Mammary epithelial cell (primary cell): ENCODE measurements at regions of chr20 and their contacts with region 1.

Region 1: DNA sequence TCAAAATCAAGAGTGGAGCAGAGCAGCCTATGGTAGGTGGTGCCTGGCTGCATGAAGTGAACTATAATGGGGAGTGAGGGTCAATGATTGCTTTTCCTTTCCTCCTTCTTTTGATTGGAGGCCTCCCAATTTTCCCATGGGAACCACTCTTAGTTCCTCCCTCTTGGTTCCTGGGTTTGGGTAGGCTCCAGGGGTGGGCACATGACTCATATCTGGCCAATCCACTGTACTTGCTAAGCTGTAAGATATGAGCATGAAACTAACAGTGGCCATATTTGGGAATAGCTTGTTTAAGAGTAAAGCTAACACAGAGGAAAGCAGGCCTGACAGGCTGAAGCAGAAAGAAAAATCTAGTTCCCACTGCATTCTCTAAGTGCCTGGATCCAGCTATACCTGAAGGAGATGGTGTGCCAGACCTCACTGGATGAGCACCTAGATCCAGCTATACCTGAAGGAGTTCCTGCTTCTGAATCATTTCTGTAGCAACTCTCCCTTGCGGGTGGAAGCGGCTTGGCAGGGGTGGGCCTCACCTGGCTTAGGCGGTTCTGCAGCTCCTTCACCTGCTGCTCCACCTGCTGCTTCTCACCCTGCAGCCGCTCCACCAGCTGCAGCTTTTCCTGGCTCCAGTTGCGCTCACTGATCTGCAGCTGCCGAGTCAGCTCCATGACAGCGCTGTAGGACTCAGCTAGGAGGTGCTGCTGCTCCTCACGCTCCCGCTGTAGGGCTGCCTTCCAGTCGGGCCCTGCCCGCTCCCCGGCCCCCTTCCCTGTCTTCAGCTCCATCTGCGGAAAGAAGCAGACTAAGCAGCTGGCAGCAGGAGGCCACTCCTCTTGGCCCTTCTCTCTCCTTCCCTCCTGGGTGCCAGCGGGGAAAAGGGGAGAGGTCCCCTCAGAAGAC is 29.0 kb upstream of the DSN1 start:
- DNase-seq: peak; percentile 13
- H3K4me3 ChIP-seq: no peak overlapping the region
- H3K27ac ChIP-seq: no peak overlapping the region
- H3K4me1 ChIP-seq: no peaks in the 10 kb centered on the region
- H3K27me3 ChIP-seq: no peaks in the 10 kb centered on the region
- CTCF ChIP-seq: no peak

Region 2: GRCh38 chr20:36728986-36729385 is 73.6 kb before region 1 on chr20:
- CTCF ChIA-PET with region 1: no interaction called
- dilution Hi-C with region 1: loop called (anchors 5 kb)
- in situ Hi-C with region 1: no loop called
- intact Hi-C with region 1: no loop called
- DNase-seq: peak; percentile 58
- H3K4me3 ChIP-seq: no peak overlapping the region
- H3K27ac ChIP-seq: no peak overlapping the region
- H3K4me1 ChIP-seq: peaks cover 5% of the 10 kb centered on the region
- H3K27me3 ChIP-seq: no peaks in the 10 kb centered on the region
- CTCF ChIP-seq: peak; percentile 35 to 39

Region 3: GRCh38 chr20:36830791-36831691 is 28.5 kb after region 1 on chr20:
- CTCF ChIA-PET with region 1: no interaction called
- dilution Hi-C with region 1: no loop called
- in situ Hi-C with region 1: no loop called
- intact Hi-C with region 1: no loop called
- DNase-seq: no peak
- H3K4me3 ChIP-seq: no peak overlapping the region
- H3K27ac ChIP-seq: peak overlapping the region; percentile 3
- H3K4me1 ChIP-seq: peaks cover 23% of the 10 kb centered on the region
- H3K27me3 ChIP-seq: no peaks in the 10 kb centered on the region
- CTCF ChIP-seq: peak; percentile 36 to 48